B cell (primary cell): ENCODE measurements at regions of chr14 and their contacts with region 1.

Region 1: DNA sequence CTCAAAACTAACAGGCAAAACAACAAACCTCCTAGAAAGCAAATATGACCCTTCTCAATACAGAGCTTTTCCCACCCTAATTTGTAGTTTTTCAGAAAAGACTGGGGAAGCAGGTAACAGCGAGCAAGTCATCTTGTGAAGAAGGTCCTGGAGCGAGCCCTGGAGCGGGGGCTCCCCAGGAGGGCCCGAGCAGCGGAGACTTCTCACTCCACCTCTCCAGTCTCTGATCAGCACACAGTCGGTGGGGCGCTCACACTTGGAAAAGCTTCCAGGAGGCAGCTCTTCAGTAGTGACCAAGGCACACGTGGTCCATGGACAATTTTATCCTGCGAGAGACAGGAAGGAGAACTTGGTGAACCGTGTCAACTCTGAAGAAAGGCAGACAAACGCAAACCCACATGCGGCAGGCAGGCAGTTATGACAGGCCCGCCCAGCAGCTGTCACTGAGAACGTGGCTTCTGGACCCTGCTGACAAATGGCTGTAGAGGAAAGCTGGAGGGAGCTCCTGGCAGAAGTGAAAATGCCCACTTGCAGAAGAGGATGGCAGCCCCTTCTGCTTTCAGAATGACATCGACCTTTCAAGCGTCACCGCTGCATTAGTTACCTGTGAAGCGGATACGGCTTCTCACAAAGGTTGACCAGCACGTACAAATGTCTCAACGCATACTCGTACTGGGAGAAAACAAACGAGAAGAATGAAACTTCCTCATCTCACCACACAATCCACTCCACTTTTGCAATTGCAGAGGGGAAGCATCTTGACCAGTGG is 44.2 kb downstream of the LGMN start:
- DNase-seq: peak; percentile 88
- ATAC-seq: peak; percentile 98
- H3K4me3 ChIP-seq: peak overlapping the region in 2 of 5 experiments; percentile 17 to 22
- H3K4me3 Mint-ChIP-seq: peak overlapping the region; percentile 78
- H3K27ac ChIP-seq: peak overlapping the region; percentile 71 to 91
- H3K27ac Mint-ChIP-seq: peak overlapping the region; percentile 86
- H3K4me1 ChIP-seq: peaks cover 40 to 50% of the 10 kb centered on the region in 2 donors
- H3K4me1 Mint-ChIP-seq: peaks cover 56% of the 10 kb centered on the region
- H3K27me3 ChIP-seq: no peaks in the 10 kb centered on the region
- H3K27me3 Mint-ChIP-seq: no peaks in the 10 kb centered on the region
- CTCF ChIP-seq: no peak

Region 2: DNA sequence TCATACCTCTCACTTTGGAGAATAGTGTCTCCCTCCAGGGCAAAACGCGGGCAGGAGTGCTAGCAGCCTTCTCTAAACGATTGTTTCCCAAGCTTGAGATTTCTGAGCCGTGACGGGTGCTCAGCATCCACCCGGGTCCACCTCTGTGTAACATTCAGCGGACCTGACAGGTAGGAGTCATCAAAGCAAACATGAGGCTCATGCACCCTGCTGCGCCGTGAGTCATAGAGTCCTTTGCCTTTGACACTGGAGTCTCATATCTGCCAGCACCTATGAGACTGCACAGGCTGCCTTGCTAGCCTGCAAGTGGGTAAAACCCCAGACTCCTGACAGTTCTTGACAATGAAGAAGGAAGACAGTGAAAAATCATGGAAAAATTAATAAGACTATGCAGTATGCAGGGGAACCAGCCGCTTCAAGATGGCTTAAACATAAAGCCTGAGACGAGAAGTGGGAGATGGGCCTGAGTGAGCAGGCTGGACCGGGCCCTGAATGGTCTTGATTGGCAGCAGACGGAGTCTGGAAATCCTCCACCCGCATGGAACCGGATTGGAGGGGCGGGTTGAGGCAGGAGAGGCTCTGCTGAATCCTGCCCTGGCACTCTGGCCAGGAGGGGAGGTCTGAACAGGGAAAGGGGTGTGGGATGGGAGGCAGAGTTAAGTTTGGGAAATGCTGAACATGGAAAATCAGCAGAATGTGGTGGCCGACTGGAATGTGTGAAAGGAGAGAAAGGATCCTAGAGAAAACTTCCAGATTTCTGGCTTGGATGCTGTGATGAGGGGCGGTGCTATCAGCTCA is 10.0 kb before region 1 on chr14:
- CTCF ChIA-PET with region 1: interaction called, 7 read pairs
- POLR2A ChIA-PET with region 1: interaction called, 5 read pairs
- intact Hi-C with region 1: loop called (anchors 1 kb)
- DNase-seq: no peak
- ATAC-seq: no peak
- H3K4me3 ChIP-seq: no peak overlapping the region
- H3K4me3 Mint-ChIP-seq: no peak overlapping the region
- H3K27ac ChIP-seq: no peak overlapping the region
- H3K27ac Mint-ChIP-seq: peak overlapping the region; percentile 56
- H3K4me1 ChIP-seq: peaks cover 25 to 30% of the 10 kb centered on the region in 2 donors
- H3K4me1 Mint-ChIP-seq: peaks cover 46% of the 10 kb centered on the region
- H3K27me3 ChIP-seq: no peaks in the 10 kb centered on the region
- H3K27me3 Mint-ChIP-seq: no peaks in the 10 kb centered on the region
- CTCF ChIP-seq: no peak